Posterior cingulate gyrus (tissue), 11 donors: ENCODE measurements at regions of chr9 and their contacts with region 1.

Region 1: DNA sequence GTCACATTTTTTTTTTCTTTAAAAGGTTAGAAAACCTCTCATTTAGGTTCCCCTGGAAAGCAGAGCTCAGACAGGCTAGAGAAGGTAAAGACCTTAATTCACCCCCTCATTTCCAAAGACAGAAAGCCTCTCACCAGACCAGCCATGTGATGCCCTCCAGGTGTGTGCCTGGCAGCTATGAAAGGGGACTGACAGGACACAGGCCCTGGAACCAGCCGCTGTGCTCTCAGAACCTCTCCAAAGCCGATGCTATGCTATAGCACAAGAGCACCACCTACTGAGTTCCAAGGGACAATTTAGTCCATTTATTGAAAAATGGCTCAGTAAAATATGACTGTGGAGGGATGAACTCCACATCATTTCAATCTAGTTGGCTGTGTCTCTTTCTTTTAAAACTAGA is 48.8 kb downstream of the FANCC start:
- DNase-seq: peak in 2 of 10 donors; percentile 21 to 75

Region 2: DNA sequence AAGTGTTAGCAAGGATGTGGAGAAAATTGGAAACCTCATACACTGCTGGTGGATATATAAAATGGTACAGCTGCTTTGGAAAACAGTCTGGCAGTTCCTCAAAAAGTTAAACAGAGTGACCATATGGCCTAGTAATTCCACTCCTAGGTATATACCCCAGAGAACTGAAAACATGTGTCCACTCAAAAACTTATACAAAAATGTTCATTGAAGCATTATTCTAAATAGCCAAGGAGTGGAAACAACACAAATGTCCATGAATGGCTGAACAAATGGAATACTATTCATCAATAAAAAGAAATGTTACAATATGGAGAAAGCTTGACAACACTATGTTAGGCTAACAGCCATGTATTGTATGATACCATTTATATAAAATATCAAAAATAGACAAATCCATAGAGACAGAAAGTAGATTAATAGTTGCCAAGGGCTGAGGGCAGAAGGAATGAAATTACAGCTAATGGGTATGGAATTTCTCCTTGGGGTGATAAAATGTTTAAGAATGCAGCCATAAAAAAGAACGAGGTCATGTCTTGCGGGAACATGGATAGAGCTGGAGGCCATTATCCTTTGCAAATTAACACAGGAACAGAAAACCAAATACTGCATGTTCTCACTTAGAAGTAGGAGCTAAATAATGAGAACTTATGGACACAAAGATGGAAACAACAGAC is 595.7 kb before region 1 on chr9:
- intact Hi-C with region 1: loop called (anchors 10 kb)
- DNase-seq: no peak

Region 3: GRCh38 chr9:94805585-94805984 is 463.1 kb before region 1 on chr9:
- intact Hi-C with region 1: no loop called
- DNase-seq: no peak

Region 4: GRCh38 chr9:95379630-95380029 is 110.9 kb after region 1 on chr9:
- intact Hi-C with region 1: no loop called
- DNase-seq: no peak

Region 5: GRCh38 chr9:95477441-95477840 is 208.8 kb after region 1 on chr9:
- intact Hi-C with region 1: no loop called
- DNase-seq: peak; percentile 80 to 99 (median 89)